ENCODE measurements at regions of chr16 and their contacts with region 1.

Region 1: GRCh38 chr16:30557957-30558788 is at the start of gene ZNF764:
- DNase-seq: peak; percentile 88 to 98 (median 96)
- ATAC-seq: peak; percentile 90
- H3K4me3 ChIP-seq: peak within 1 kb of the TSS; percentile 68 to 84
- H3K4me3 Mint-ChIP-seq: peak within 1 kb of the TSS; percentile 84
- H3K27ac ChIP-seq: peak within 1 kb of the TSS; percentile 80 to 88
- H3K27ac Mint-ChIP-seq: peak within 1 kb of the TSS; percentile 93
- H3K4me1 ChIP-seq: peaks cover 28% of the 10 kb centered on the region
- H3K4me1 Mint-ChIP-seq: peaks cover 35% of the 10 kb centered on the region
- H3K27me3 ChIP-seq: no peaks in the 10 kb centered on the region
- H3K27me3 Mint-ChIP-seq: no peaks in the 10 kb centered on the region
- CTCF ChIP-seq: no peak
- total RNA-seq, gene ZNF764: 15.0 to 15.6 TPM

Region 2: GRCh38 chr16:29915590-29916247 is 642.5 kb before region 1 on chr16:
- CTCF ChIA-PET with region 1: no interaction called
- POLR2A ChIA-PET with region 1: no interaction called
- intact Hi-C with region 1: no loop called
- DNase-seq: no peak
- ATAC-seq: no peak
- H3K4me3 ChIP-seq: no peak overlapping the region
- H3K4me3 Mint-ChIP-seq: no peak overlapping the region
- H3K27ac ChIP-seq: no peak overlapping the region
- H3K27ac Mint-ChIP-seq: no peak overlapping the region
- H3K4me1 ChIP-seq: no peaks in the 10 kb centered on the region
- H3K4me1 Mint-ChIP-seq: peaks cover 2% of the 10 kb centered on the region
- H3K27me3 ChIP-seq: no peaks in the 10 kb centered on the region
- H3K27me3 Mint-ChIP-seq: no peaks in the 10 kb centered on the region
- CTCF ChIP-seq: no peak

Region 3: GRCh38 chr16:30417529-30418349 is 140.4 kb before region 1 on chr16:
- CTCF ChIA-PET with region 1: no interaction called
- POLR2A ChIA-PET with region 1: interaction called, 11 read pairs
- intact Hi-C with region 1: no loop called
- DNase-seq: peak; percentile 78 to 98 (median 88)
- ATAC-seq: peak; percentile 87
- H3K4me3 ChIP-seq: peak overlapping the region; percentile 52 to 72
- H3K4me3 Mint-ChIP-seq: peak overlapping the region; percentile 74
- H3K27ac ChIP-seq: peak overlapping the region; percentile 81 to 91
- H3K27ac Mint-ChIP-seq: peak overlapping the region; percentile 77
- H3K4me1 ChIP-seq: peaks cover 18% of the 10 kb centered on the region
- H3K4me1 Mint-ChIP-seq: peaks cover 7% of the 10 kb centered on the region
- H3K27me3 ChIP-seq: no peaks in the 10 kb centered on the region
- H3K27me3 Mint-ChIP-seq: no peaks in the 10 kb centered on the region
- CTCF ChIP-seq: no peak

Region 4: DNA sequence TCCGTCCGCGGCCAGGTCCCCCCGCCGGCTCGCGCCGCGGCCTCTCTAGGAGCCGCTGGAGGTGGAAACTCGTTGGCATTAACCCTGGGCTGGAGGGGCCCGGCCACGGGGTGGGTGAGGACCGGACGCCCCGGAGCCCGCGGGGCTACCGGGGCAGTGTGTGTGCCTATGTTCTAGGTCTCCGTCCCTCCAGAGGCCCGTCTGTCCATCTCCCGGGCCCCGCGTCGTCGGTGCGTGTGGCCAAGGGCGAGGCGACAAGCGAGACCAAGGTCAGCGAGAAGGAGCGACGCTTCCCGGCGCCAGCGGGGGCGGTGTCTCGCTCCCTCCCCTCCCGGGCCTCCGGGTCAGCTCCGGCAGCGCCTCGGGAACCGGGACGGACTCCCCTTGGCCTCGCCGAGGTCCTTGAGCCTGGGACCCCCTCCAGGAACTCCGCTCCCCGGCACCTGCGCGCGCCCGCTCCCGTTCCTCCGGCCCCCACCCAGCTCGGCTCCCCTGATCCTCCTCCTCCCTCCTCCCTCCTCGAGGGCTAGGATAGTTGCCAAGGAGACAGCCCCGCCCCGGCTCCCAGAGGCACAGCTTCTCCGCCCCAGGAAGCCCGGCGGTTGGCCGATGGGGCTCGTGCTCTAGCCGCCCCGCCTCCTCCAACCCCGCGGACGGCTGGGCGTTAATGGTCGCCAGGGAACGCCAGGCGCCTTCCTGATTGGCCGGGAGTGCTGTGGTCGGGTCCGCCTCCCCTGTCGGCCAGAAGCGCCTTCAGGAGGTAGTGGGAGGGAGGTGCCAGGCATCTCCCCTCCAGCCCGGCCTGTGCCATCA is 31.1 kb before region 1 on chr16:
- CTCF ChIA-PET with region 1: interaction called, 6 read pairs
- POLR2A ChIA-PET with region 1: interaction called, 10 read pairs
- intact Hi-C with region 1: no loop called
- DNase-seq: peak; percentile 53 to 92 (median 86)
- ATAC-seq: peak; percentile 75
- H3K4me3 ChIP-seq: peak overlapping the region; percentile 74 to 75
- H3K4me3 Mint-ChIP-seq: peak overlapping the region; percentile 87
- H3K27ac ChIP-seq: peak overlapping the region; percentile 59 to 69
- H3K27ac Mint-ChIP-seq: peak overlapping the region; percentile 90
- H3K4me1 ChIP-seq: peaks cover 12% of the 10 kb centered on the region
- H3K4me1 Mint-ChIP-seq: peaks cover 24% of the 10 kb centered on the region
- H3K27me3 ChIP-seq: no peaks in the 10 kb centered on the region
- H3K27me3 Mint-ChIP-seq: no peaks in the 10 kb centered on the region
- CTCF ChIP-seq: no peak

Region 5: DNA sequence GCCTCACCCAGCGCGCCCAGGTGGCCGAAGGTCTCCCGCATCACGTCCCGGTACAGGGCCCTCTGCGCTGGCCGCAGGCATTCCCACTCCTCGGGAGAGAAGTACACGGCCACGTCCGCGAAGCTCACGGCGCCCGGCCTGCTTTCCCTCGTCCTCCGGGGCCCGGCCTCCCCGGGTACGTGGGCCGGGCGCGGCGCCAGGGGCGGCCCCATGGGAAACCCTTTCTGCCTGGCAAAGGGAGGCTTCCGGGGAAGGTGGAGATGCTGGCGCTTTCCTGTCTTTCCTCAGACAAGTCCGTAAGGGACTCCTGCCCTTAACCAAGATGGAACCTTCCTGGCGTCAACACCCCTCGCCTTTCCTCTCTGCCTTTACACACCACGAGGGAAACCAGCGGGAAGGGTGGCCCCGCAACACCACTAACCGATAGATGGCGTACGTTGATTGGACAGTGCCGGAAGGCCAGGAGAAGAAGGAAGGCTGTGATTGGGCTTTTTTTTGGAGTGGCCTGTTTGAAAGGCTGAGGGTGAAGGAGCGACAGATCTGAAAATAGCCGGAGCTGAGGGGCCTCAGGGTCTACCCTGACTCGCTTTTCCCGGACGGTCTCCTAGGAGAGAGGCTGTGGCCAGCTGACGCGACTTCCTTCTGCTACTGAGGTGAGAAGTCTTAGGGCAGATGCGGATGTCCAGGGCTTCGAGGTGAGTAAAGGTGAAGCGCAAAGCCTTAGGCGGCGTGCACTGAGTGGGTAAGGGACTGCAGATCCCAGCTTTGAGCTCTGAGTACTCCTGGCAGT is 27.4 kb after region 1 on chr16 and contains the start of gene ZNF785:
- CTCF ChIA-PET with region 1: interaction called, 5 read pairs
- POLR2A ChIA-PET with region 1: interaction called, 8 read pairs
- intact Hi-C with region 1: loop called (anchors 1 kb)
- DNase-seq: peak; percentile 81 to 98 (median 91)
- ATAC-seq: peak; percentile 99
- H3K4me3 ChIP-seq: peak within 1 kb of the TSS; percentile 68 to 78
- H3K4me3 Mint-ChIP-seq: peak within 1 kb of the TSS; percentile 94
- H3K27ac ChIP-seq: peak within 1 kb of the TSS; percentile 44 to 61
- H3K27ac Mint-ChIP-seq: peak within 1 kb of the TSS; percentile 91
- H3K4me1 ChIP-seq: peaks cover 12% of the 10 kb centered on the region
- H3K4me1 Mint-ChIP-seq: peaks cover 27% of the 10 kb centered on the region
- H3K27me3 ChIP-seq: no peaks in the 10 kb centered on the region
- H3K27me3 Mint-ChIP-seq: no peaks in the 10 kb centered on the region
- CTCF ChIP-seq: no peak
- total RNA-seq, gene ZNF785: 5.0 to 6.9 TPM

Region 6: DNA sequence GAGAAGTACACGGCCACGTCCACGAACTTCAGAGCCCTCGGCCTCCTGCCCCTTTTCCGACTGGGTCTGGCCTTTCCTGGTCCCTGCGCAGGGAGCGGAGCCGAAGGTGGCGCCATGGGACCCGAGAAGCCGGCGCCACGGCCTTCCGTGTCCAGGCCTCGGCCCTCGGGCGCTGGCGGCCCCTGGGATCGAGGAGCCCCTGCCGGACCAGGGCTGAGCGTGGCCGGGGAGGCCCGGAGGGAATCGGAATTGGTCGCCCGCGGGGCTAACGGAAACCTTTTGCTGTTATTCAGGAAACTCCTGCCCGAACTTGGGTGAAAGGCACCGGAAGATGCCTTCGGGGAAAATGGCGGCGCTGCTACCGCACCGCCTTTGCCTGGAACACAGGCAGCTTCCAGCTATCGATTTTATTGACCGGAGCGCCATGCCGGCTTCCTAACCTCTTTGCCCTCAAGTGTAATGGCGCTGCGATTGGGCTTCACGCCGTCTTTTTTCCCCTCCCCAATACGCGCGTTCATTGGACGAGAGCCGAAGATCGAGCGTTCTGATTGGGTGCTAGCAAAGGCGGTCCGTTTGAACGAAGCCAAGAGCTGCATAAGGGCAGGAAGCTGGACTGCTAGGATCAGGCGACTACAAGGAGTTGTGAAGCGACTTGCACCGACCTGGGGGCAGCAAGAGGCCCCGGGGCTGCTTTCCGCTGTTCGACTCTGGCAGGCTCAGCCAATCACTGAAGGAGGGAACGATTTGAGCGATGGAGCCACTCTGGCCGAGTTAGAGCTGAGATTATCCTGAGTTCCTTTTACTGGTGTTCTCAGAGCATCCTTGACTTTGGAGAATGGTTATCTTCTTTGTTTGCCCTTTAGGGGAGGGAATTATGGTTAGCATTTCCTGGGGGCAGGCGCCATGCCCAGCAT is 52.0 kb after region 1 on chr16 and contains the start of gene ZNF689:
- CTCF ChIA-PET with region 1: no interaction called
- POLR2A ChIA-PET with region 1: interaction called, 5 read pairs
- intact Hi-C with region 1: loop called in 1 of 2 experiments (anchors 1 kb)
- DNase-seq: peak; percentile 90 to 98 (median 94)
- ATAC-seq: peak; percentile 88
- H3K4me3 ChIP-seq: peak within 1 kb of the TSS; percentile 69 to 93
- H3K4me3 Mint-ChIP-seq: peak within 1 kb of the TSS; percentile 95
- H3K27ac ChIP-seq: peak within 1 kb of the TSS; percentile 91 to 93
- H3K27ac Mint-ChIP-seq: peak within 1 kb of the TSS; percentile 98
- H3K4me1 ChIP-seq: peaks cover 12% of the 10 kb centered on the region
- H3K4me1 Mint-ChIP-seq: peaks cover 24% of the 10 kb centered on the region
- H3K27me3 ChIP-seq: peaks cover 0 to 2% of the 10 kb centered on the region in 2 experiments
- H3K27me3 Mint-ChIP-seq: no peaks in the 10 kb centered on the region
- CTCF ChIP-seq: no peak
- total RNA-seq, gene ZNF689: 15.6 to 17.5 TPM

Region 7: DNA sequence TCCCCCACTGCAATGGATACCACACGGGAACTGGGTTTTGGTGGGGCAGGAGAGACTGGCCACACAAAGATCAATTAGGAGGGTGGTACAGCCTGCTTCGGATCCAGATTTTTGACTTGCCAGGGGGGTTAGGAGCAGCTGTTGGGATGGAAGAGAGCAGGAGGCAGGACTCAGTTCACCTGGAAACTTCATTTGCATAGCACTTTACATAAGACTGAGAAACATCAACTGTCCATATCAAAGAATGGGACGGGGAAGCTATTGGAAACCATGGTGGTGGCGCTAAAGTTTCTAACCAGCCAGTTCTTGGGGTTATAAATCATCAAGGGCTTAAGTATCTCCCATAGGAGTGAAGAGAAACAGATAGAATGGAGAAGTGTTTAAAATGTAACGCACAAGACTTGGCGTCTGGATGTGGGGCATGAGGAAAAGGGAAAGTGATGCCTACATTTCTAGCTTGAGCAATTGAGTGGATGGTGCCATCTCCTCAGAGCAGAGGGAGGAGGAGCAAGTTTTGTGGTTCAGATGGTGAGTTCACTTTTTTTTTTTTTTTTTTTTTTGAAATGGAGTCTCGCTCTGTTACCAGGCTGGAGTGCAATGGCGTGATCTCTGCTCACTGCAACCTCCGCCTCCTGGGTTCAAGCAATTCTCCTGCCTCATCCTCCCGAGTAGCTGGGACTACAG is 134.3 kb after region 1 on chr16:
- CTCF ChIA-PET with region 1: interaction called, 4 read pairs
- POLR2A ChIA-PET with region 1: no interaction called
- intact Hi-C with region 1: loop called in 1 of 2 experiments (anchors 1 kb)
- DNase-seq: no peak
- ATAC-seq: no peak
- H3K4me3 ChIP-seq: no peak overlapping the region
- H3K4me3 Mint-ChIP-seq: no peak overlapping the region
- H3K27ac ChIP-seq: no peak overlapping the region
- H3K27ac Mint-ChIP-seq: no peak overlapping the region
- H3K4me1 ChIP-seq: peaks cover 7% of the 10 kb centered on the region
- H3K4me1 Mint-ChIP-seq: peaks cover 15% of the 10 kb centered on the region
- H3K27me3 ChIP-seq: no peaks in the 10 kb centered on the region
- H3K27me3 Mint-ChIP-seq: no peaks in the 10 kb centered on the region
- CTCF ChIP-seq: no peak

Region 8: GRCh38 chr16:30786936-30787612 is 228.9 kb after region 1 on chr16 and contains the start of gene ZNF629:
- CTCF ChIA-PET with region 1: no interaction called
- POLR2A ChIA-PET with region 1: no interaction called
- intact Hi-C with region 1: no loop called
- DNase-seq: peak in 6 of 9 experiments; percentile 20 to 60 (median 43)
- ATAC-seq: peak; percentile 59
- H3K4me3 ChIP-seq: peak within 1 kb of the TSS; percentile 79 to 99
- H3K4me3 Mint-ChIP-seq: peak within 1 kb of the TSS; percentile 83
- H3K27ac ChIP-seq: peak within 1 kb of the TSS in 1 of 2 experiments; percentile 32
- H3K27ac Mint-ChIP-seq: no peak within 1 kb of the TSS
- H3K4me1 ChIP-seq: peaks cover 17% of the 10 kb centered on the region
- H3K4me1 Mint-ChIP-seq: peaks cover 15% of the 10 kb centered on the region
- H3K27me3 ChIP-seq: peaks cover 0 to 11% of the 10 kb centered on the region in 2 experiments
- H3K27me3 Mint-ChIP-seq: no peaks in the 10 kb centered on the region
- CTCF ChIP-seq: no peak
- total RNA-seq, gene ZNF629: 1.7 to 1.9 TPM

Measured in CD8-positive, alpha-beta T cell (primary cell).